ENCODE measurements at regions of chr11 and their contacts with region 1.

Region 1: GRCh38 chr11:27698872-27699474 is 1.3 kb downstream of the BDNF start:
- DNase-seq: peak; percentile 88
- ATAC-seq: peak; percentile 50
- H3K4me3 ChIP-seq: peak overlapping the region; percentile 79
- H3K27ac ChIP-seq: no peak overlapping the region
- H3K4me1 ChIP-seq: peaks cover 31% of the 10 kb centered on the region
- H3K27me3 ChIP-seq: no peaks in the 10 kb centered on the region
- CTCF ChIP-seq: peak; percentile 72

Region 2: GRCh38 chr11:27795955-27796861 is 97.2 kb after region 1 on chr11:
- CTCF ChIA-PET with region 1: no interaction called
- POLR2A ChIA-PET with region 1: no interaction called
- intact Hi-C with region 1: no loop called
- DNase-seq: no peak
- ATAC-seq: peak; percentile 67
- H3K4me3 ChIP-seq: no peak overlapping the region
- H3K27ac ChIP-seq: no peak overlapping the region
- H3K4me1 ChIP-seq: no peaks in the 10 kb centered on the region
- H3K27me3 ChIP-seq: no peaks in the 10 kb centered on the region
- CTCF ChIP-seq: no peak

Region 3: GRCh38 chr11:27934830-27935145 is 235.8 kb after region 1 on chr11:
- CTCF ChIA-PET with region 1: no interaction called
- POLR2A ChIA-PET with region 1: no interaction called
- intact Hi-C with region 1: loop called (anchors 5 kb)
- DNase-seq: peak; percentile 95
- ATAC-seq: peak; percentile 89
- H3K4me3 ChIP-seq: peak overlapping the region; percentile 33; the same call in 1 of the 2 replicates
- H3K27ac ChIP-seq: peak overlapping the region; percentile 95
- H3K4me1 ChIP-seq: peaks cover 29% of the 10 kb centered on the region
- H3K27me3 ChIP-seq: no peaks in the 10 kb centered on the region
- CTCF ChIP-seq: no peak

Region 4: DNA sequence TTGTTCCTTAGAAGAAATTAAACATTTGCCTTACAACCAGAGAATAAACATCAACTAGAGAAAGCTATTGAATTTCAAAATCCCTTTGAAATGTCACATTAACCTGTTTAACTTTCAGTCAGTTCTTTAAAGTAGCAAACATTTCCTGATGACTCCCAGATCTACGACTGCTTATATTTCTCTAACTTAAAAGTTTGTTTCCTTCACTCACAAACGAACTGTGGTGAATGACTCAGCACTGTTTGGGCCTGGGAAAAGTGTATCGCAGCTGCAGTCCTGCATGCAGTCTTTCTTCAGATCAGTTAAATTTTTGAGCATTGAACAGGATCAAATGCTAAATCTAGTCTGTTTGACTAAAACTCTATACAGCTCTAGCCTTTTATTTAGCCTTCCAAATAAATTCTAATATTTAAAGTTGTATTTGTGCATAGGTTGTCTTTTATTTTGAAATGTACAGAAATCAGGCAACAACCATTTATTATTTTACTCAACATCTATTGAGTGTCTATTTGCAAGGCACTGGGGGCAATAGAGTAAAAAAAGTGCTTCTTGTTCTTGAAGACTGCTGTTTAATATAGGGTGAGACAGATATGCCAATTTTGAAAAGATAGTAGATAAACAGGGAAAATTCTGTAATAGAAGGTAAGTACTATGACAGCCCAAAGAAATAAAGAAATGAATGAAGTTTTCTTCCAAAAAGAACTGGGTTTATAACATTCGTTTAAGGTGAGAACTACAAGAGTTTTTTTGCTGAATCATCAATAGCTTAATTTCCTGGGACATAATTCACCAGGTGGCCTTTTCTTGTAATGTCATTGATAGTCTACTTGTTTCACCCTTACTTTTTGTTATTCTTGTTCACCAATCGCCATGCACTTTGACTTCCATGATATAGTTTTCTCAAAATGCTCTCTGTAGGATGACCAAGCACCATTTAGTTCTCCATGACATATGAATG is 644.6 kb after region 1 on chr11:
- CTCF ChIA-PET with region 1: no interaction called
- POLR2A ChIA-PET with region 1: no interaction called
- intact Hi-C with region 1: loop called (anchors 2 kb)
- DNase-seq: peak; percentile 77
- ATAC-seq: peak; percentile 95
- H3K4me3 ChIP-seq: no peak overlapping the region
- H3K27ac ChIP-seq: peak overlapping the region; percentile 71
- H3K4me1 ChIP-seq: peaks cover 31% of the 10 kb centered on the region
- H3K27me3 ChIP-seq: no peaks in the 10 kb centered on the region
- CTCF ChIP-seq: no peak

Region 5: GRCh38 chr11:28910926-28911325 is 1212.0 kb after region 1 on chr11:
- CTCF ChIA-PET with region 1: interaction called, 15 read pairs
- POLR2A ChIA-PET with region 1: no interaction called
- intact Hi-C with region 1: no loop called
- DNase-seq: no peak
- ATAC-seq: no peak
- H3K4me3 ChIP-seq: no peak overlapping the region
- H3K27ac ChIP-seq: no peak overlapping the region
- H3K4me1 ChIP-seq: no peaks in the 10 kb centered on the region
- H3K27me3 ChIP-seq: no peaks in the 10 kb centered on the region
- CTCF ChIP-seq: no peak

Region 6: GRCh38 chr11:29272019-29272654 is 1573.2 kb after region 1 on chr11:
- CTCF ChIA-PET with region 1: interaction called, 10 read pairs
- POLR2A ChIA-PET with region 1: no interaction called
- intact Hi-C with region 1: no loop called
- DNase-seq: peak; percentile 45
- ATAC-seq: peak; percentile 87
- H3K4me3 ChIP-seq: no peak overlapping the region
- H3K27ac ChIP-seq: no peak overlapping the region
- H3K4me1 ChIP-seq: peaks cover 7% of the 10 kb centered on the region
- H3K27me3 ChIP-seq: no peaks in the 10 kb centered on the region
- CTCF ChIP-seq: peak; percentile 58

Measured in PC-3 (cell line).